Heart right ventricle (tissue), 16 donors: ENCODE measurements at regions of chr19 and their contacts with region 1.

Region 1: GRCh38 chr19:7230826-7231225 is 63.4 kb downstream of the INSR start:
- DNase-seq: peak; percentile 60 to 73
- ATAC-seq: peak; percentile 78 to 95 (median 88)
- H3K4me3 ChIP-seq: no peak overlapping the region
- H3K27ac ChIP-seq: peak overlapping the region in 8 of 10 donors; percentile 15 to 71 (median 38)
- H3K4me1 ChIP-seq: peaks cover 4 to 86% (median 35%) of the 10 kb centered on the region in 9 donors
- H3K27me3 ChIP-seq: no peaks in the 10 kb centered on the region
- CTCF ChIP-seq: no peak

Region 2: DNA sequence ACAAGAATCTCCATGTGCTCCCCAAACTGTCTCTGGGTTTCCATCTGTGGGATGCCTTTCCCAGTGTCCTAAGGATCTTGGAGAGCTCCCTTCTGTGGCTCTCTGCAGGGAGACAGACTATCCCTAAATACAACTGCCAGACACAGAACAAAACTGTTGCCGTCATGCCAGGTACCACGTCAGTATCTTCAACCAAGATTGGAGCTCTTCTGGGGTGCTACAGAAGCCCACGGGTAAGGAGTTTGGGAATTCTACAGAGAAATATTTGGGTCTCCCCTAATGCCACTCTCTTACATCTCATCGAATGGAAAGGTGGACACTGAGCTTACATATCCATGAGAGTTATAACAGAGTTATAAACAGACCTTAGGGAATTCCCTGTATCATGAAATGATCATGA is 167.5 kb before region 1 on chr19:
- intact Hi-C with region 1: no loop called
- DNase-seq: no peak
- ATAC-seq: no peak
- H3K4me3 ChIP-seq: no peak overlapping the region
- H3K27ac ChIP-seq: no peak overlapping the region
- H3K4me1 ChIP-seq: no peaks in the 10 kb centered on the region
- H3K27me3 ChIP-seq: no peaks in the 10 kb centered on the region
- CTCF ChIP-seq: no peak

Region 3: GRCh38 chr19:7287722-7288500 is 57.1 kb after region 1 on chr19:
- intact Hi-C with region 1: loop called in 1 of 10 experiments (anchors 10 kb)
- DNase-seq: no peak
- ATAC-seq: no peak
- H3K4me3 ChIP-seq: no peak overlapping the region
- H3K27ac ChIP-seq: peak overlapping the region in 2 of 10 donors; percentile 3 to 48
- H3K4me1 ChIP-seq: peaks cover 0 to 41% (median 15%) of the 10 kb centered on the region in 9 donors
- H3K27me3 ChIP-seq: no peaks in the 10 kb centered on the region
- CTCF ChIP-seq: no peak